ENCODE measurements at regions of chr11 and their contacts with region 1.

Region 1: GRCh38 chr11:68312117-68312779 is at the start of gene LRP5:
- DNase-seq: no peak
- H3K4me3 Mint-ChIP-seq: peak within 1 kb of the TSS; percentile 84
- H3K27ac Mint-ChIP-seq: no peak within 1 kb of the TSS
- H3K4me1 Mint-ChIP-seq: peaks cover 25% of the 10 kb centered on the region
- H3K27me3 Mint-ChIP-seq: peaks cover 26% of the 10 kb centered on the region
- total RNA-seq, gene LRP5: 9.4 and 11.1 TPM in 2 replicates

Region 2: DNA sequence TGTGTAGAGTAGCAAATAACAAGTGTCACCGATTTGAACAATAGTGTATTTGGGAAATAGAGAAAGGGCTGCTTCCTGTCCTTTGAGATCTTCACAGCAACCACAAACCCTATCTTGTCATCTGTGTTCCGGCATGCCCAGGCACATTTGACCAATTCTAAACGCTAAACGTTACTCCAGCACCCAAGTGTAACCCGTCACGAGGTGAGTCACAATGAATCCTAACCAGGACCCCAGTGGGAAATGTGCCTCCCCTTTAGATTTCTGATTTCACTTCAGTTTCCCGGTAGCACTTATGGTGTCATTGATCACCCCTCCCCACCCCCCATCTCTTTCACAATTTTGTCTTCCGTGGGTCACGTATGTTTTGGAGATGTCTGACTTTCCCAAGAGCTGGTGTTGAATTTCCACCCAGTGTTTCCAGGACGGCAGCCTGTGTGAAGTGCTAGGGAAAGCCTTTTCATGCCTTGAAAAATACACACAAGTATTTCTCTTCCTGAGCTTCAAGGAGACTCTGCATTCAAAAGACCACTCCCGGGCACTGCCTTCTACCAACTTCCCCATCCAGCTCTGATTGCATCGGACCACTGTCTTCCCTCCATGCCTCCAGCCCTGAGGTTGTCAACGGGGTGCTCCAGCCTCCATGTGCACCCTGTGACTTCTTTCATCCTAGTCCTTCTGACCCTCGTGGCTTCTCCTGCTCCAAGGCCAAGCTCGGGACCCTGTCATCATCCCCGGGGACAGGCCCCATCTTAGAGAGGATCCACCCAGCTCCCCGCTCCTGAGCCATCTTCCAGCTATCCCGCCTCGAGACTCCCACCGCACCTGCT is 29.9 kb before region 1 on chr11:
- intact Hi-C with region 1: no loop called
- DNase-seq: peak; percentile 52
- H3K4me3 Mint-ChIP-seq: peak overlapping the region; percentile 45
- H3K27ac Mint-ChIP-seq: peak overlapping the region; percentile 18
- H3K4me1 Mint-ChIP-seq: peaks cover 26% of the 10 kb centered on the region
- H3K27me3 Mint-ChIP-seq: peaks cover 7% of the 10 kb centered on the region

Region 3: DNA sequence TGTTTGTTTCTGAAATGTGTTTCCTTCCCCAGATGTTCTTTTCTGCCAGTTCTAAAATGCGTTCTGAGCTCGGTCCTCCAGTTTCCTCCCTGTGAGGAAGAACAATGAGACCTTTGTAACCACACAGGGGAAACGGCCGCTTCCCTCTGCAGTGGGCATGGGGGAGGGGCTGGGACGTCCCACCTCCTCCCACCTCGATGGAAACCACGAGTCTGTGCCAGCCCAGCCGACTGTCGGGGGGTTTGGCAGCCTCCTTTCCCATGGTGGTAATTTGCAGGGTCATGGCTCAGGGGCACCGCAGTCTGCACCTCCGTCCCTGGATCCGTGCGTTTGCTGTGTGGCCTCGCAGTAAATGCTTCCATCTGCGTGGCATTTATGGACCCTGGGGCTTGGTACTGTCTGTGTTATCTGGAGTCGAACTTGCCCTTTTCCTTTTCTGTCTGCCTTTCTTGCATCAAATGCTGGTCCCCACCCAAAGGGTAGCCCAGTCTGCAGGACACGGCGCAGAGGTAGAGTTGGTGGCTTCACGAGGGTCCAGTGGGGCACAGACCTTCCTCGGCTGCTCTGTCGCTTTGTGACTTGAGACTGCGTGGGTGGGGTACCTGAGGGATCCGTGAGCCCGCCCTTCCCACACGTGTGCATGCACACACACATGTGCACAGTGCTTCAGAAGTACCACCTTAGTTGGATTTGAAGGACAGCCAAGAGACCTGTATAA is 16.3 kb after region 1 on chr11:
- intact Hi-C with region 1: no loop called
- DNase-seq: no peak
- H3K4me3 Mint-ChIP-seq: peak overlapping the region; percentile 10
- H3K27ac Mint-ChIP-seq: no peak overlapping the region
- H3K4me1 Mint-ChIP-seq: peaks cover 41% of the 10 kb centered on the region
- H3K27me3 Mint-ChIP-seq: peaks cover 2% of the 10 kb centered on the region

Region 4: DNA sequence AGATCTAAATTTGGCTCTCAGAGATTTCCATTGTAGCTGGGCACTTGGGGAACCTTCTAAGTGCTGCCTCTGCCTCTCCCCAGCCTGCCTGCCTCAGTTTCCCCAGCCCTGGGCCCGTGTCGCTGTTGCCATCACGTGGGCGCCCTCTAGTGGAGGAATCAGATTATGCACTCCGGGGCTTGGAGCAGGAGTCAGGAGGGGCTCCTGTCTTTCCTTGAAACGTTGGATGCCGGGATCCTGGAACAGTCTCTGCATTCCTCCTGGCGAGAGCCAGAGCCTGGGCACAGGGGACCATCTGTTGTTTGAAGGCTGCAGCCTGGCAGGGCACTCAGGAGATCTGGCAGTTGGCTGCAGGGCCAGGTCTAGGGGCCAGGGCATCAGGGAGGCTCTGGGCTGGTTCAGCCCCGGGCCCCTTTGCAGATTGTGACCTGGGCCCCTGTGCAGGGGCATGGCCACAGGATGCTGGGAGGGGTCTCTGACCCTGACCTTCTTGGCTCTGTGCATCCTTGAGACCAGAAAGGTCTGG is 71.8 kb after region 1 on chr11:
- intact Hi-C with region 1: loop called (anchors 5 kb)
- DNase-seq: peak; percentile 50
- H3K4me3 Mint-ChIP-seq: no peak overlapping the region
- H3K27ac Mint-ChIP-seq: no peak overlapping the region
- H3K4me1 Mint-ChIP-seq: peaks cover 20% of the 10 kb centered on the region
- H3K27me3 Mint-ChIP-seq: peaks cover 2% of the 10 kb centered on the region